ENCODE measurements at regions of chr6 and their contacts with region 1.

Region 1: GRCh38 chr6:155530219-155530834 is 74.7 kb upstream of the NOX3 start:
- DNase-seq: peak; percentile 77
- H3K4me3 ChIP-seq: no peak overlapping the region
- H3K27ac ChIP-seq: peak overlapping the region; percentile 83
- H3K4me1 ChIP-seq: peaks cover 16% of the 10 kb centered on the region
- H3K27me3 ChIP-seq: no peaks in the 10 kb centered on the region
- CTCF ChIP-seq: peak; percentile 55 to 60
- POLR2A ChIP-seq: no peak

Region 2: DNA sequence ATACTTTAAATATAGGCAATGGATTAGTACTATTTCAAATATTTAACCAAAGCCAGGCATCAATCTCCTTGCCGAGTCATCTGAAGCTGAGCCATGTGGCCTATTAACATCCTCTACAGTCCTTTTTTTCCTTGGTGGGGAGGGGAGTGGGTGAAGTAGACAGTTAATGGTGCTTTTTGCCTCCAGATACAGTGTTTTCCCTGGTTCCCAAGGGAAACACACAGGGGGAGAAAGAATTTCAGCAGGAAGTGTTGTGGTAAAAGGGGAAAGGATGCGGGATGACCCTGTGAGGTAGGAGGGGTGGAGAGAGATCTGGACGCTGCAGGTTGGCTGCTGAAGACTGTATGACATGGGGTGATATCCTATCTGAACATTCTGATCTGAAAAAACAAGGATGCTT is 256.9 kb before region 1 on chr6:
- CTCF ChIA-PET with region 1: no interaction called
- POLR2A ChIA-PET with region 1: no interaction called
- dilution Hi-C with region 1: no loop called
- intact Hi-C with region 1: loop called (anchors 2 kb)
- DNase-seq: peak; percentile 88
- H3K4me3 ChIP-seq: no peak overlapping the region
- H3K27ac ChIP-seq: peak overlapping the region; percentile 97
- H3K4me1 ChIP-seq: peaks cover 41% of the 10 kb centered on the region
- H3K27me3 ChIP-seq: no peaks in the 10 kb centered on the region
- CTCF ChIP-seq: no peak
- POLR2A ChIP-seq: no peak

Region 3: DNA sequence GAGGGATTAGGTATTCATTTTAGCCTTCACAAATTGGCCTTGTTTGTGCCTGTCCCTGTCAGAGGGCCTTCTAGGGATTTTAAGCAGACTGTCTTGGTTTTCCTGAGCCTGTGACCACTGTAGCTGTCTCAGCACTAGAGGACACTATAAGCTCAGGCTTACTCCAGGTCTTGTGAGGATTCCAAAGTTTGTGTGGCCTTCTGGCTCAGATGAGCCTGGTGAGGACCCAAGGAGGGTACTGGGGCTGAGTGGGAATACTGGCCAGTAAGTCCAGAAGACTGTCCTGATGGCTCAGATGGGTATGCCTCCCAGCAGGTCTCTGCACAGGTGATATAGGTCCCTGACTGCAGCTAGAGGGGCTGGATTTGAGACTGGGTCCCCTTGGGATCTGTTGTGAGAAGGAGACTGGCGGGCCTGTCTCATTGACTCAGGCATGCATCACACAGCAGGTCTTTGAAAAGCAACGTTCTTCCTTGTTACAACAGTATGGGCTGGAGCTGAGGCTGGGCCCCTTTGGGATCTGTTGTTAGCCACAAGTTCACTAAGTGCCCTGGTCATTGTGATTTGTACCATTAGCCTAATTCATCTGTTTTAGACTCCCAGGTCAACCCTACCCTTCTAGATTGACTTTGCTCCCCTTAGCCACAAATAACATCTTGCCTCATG is 189.7 kb before region 1 on chr6:
- CTCF ChIA-PET with region 1: interaction called, 26 read pairs
- POLR2A ChIA-PET with region 1: no interaction called
- dilution Hi-C with region 1: no loop called
- intact Hi-C with region 1: loop called (anchors 1 kb)
- DNase-seq: no peak
- H3K4me3 ChIP-seq: no peak overlapping the region
- H3K27ac ChIP-seq: no peak overlapping the region
- H3K4me1 ChIP-seq: no peaks in the 10 kb centered on the region
- H3K27me3 ChIP-seq: no peaks in the 10 kb centered on the region
- CTCF ChIP-seq: peak; percentile 11 to 15
- POLR2A ChIP-seq: no peak

Region 4: GRCh38 chr6:155493694-155494143 is 36.6 kb before region 1 on chr6:
- CTCF ChIA-PET with region 1: interaction called, 6 read pairs
- POLR2A ChIA-PET with region 1: no interaction called
- dilution Hi-C with region 1: no loop called
- intact Hi-C with region 1: loop called (anchors 1 kb)
- DNase-seq: peak; percentile 96
- H3K4me3 ChIP-seq: peak overlapping the region in 1 of 3 experiments; percentile 6
- H3K27ac ChIP-seq: peak overlapping the region; percentile 96
- H3K4me1 ChIP-seq: peaks cover 26% of the 10 kb centered on the region
- H3K27me3 ChIP-seq: no peaks in the 10 kb centered on the region
- CTCF ChIP-seq: no peak
- POLR2A ChIP-seq: peak; percentile 64

Region 5: DNA sequence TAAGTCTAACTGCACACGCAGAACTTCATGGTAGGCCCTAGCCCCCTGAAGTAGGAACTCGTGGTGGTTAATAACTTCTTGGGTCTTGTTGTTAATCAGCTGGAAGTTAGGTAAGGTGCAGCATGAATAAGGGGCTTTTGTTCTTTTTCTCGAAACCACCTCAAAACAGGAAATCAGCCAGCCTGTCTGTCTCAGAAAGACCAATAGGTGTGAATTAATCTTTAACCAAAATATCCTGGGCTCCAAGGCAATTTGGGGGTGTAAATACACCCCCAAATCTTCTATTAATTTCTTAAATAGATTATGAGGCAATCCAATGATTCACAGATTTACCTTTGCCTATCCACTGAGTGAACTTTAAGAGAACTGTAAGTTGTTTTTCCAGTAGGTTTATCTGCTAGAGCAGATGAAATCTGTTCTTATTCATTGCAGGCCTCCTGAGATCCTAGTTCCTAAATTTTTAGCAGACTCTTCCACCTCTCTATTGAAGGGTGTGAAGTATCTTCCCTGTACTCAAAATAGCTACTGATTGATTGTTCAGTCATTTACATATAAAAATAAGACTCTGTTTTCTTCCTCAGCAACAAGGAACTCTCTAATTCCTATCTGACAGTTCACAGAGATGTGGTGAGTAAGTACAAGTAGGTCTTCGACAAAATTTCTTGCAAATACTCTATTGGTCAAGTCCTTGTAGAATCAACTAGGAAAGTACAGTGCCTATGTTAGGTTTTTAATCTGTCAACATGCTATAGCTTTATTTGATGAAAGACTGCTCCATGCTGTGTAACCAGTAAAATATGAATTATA is 352.4 kb after region 1 on chr6:
- CTCF ChIA-PET with region 1: no interaction called
- POLR2A ChIA-PET with region 1: no interaction called
- dilution Hi-C with region 1: no loop called
- intact Hi-C with region 1: loop called (anchors 5 kb)
- DNase-seq: peak; percentile 60
- H3K4me3 ChIP-seq: no peak overlapping the region
- H3K27ac ChIP-seq: peak overlapping the region; percentile 53
- H3K4me1 ChIP-seq: peaks cover 43% of the 10 kb centered on the region
- H3K27me3 ChIP-seq: no peaks in the 10 kb centered on the region
- CTCF ChIP-seq: no peak
- POLR2A ChIP-seq: no peak

Region 6: DNA sequence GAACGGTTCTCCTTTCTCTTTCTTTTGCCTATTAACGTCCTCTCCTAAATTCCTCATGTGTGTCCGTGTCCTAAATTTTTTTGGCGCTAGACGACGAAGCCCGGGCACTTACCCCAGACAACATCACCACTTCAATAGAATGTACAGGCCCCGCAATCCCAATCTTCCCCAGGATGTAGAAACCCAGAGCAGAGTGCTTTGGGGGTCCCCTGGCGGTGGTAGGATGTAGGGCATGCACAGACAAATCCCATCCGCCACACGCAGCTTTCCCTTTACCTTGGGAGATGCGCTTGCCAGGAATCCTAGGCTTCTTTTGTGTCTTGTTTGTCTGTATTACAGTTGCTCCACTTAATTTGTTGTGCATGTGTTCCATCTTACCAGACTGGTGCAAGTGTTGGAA is 829.6 kb after region 1 on chr6:
- CTCF ChIA-PET with region 1: no interaction called
- POLR2A ChIA-PET with region 1: no interaction called
- dilution Hi-C with region 1: no loop called
- intact Hi-C with region 1: loop called (anchors 5 kb)
- DNase-seq: no peak
- H3K4me3 ChIP-seq: no peak overlapping the region
- H3K27ac ChIP-seq: no peak overlapping the region
- H3K4me1 ChIP-seq: no peaks in the 10 kb centered on the region
- H3K27me3 ChIP-seq: no peaks in the 10 kb centered on the region
- CTCF ChIP-seq: peak in 1 of 2 donors; percentile 13
- POLR2A ChIP-seq: no peak

Measured in endothelial cell of umbilical vein (primary cell).